CD4-positive, alpha-beta T cell (primary cell): ENCODE measurements at regions of chr5 and their contacts with region 1.

Region 1: DNA sequence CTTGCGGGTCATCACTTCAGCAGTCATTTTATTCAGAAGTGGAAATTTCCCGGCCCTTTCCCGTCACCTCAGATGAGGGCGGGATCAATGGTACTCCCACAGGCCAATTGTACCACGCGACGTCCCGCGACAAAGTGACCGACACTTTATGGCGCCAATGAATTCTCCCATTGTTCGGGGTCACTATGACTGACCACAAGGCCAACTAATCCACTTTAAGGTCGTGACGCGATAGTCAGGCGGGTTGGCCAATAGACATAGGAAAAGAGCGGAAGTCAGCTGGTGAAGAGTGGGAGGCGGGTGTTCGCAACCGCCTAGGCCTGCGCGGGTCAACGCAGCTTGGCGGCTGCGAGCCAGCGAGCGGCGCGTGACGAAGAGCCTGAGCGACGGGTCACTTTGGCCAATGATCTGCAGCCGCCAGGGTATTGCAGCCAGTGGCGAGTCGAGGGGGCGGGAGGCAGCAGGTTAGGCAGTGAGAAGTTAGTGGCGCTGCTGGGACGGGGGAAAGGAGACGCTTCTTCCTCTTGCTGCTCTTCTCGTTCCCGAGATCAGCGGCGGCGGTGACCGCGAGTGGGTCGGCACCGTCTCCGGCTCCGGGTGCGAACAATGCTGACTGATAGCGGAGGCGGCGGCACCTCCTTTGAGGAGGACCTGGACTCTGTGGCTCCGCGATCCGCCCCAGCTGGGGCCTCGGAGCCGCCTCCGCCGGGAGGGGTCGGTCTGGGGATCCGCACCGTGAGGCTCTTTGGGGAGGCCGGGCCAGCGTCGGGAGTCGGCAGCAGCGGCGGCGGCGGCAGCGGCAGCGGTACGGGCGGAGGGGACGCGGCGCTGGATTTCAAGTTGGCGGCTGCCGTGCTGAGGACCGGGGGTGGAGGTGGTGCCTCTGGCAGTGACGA is at the start of gene ANKHD1:
- DNase-seq: peak; percentile 90 to 100 (median 94)
- ATAC-seq: peak; percentile 78
- H3K4me3 ChIP-seq: peak within 1 kb of the TSS; percentile 97
- H3K4me3 Mint-ChIP-seq: no peak within 1 kb of the TSS
- H3K27ac ChIP-seq: peak within 1 kb of the TSS; percentile 91 to 96
- H3K27ac Mint-ChIP-seq: no peak within 1 kb of the TSS
- H3K4me1 ChIP-seq: peaks cover 36% of the 10 kb centered on the region
- H3K4me1 Mint-ChIP-seq: peaks cover 41% of the 10 kb centered on the region
- H3K27me3 ChIP-seq: no peaks in the 10 kb centered on the region
- H3K27me3 Mint-ChIP-seq: no peaks in the 10 kb centered on the region
- CTCF ChIP-seq: no peak
- total RNA-seq, gene ANKHD1: 202 to 212 TPM

Region 2: DNA sequence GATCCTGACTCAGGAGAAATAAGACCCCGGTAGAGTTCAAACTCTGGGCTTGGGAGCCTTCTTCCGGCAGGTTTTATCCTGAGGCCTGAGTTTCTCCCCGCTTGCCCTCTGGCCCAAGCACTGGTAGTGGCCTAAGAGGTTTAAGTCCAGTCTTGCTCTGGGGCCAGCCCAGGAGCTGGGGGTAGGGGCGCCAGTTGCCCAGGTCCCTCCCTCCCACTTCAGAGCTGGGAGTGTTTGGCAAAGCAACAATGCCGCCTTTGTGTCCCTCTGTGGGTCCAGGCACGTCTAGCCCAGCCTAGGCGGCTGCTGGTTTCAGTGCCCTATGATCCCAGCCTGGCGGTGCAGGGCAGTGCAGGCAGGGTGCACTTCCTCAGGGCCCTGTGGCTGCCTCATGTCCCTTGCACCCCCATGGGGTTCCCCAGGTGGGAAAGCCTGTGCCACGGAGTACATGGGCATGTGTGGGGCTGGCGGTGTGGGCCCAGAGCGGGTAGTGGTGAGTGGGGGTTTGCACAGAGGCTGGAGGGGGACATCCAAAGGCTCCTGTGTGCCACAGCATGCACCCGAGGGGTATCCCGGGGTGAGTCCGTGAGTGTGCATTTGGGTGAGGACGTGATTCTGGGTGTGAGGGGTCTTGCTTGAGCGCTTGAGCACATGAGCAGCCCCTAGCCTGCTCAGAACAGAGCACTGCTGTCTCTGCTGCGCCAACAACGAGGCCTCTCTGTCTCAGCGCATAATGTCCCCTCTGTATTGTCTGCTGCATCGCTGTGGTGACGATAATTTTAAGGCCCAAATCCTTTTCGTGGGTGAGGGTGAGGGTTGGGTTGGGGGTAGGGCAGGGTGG is 667.7 kb before region 1 on chr5:
- CTCF ChIA-PET with region 1: no interaction called
- POLR2A ChIA-PET with region 1: no interaction called
- intact Hi-C with region 1: no loop called
- DNase-seq: no peak
- ATAC-seq: no peak
- H3K4me3 ChIP-seq: no peak overlapping the region
- H3K4me3 Mint-ChIP-seq: no peak overlapping the region
- H3K27ac ChIP-seq: no peak overlapping the region
- H3K27ac Mint-ChIP-seq: no peak overlapping the region
- H3K4me1 ChIP-seq: no peaks in the 10 kb centered on the region
- H3K4me1 Mint-ChIP-seq: no peaks in the 10 kb centered on the region
- H3K27me3 ChIP-seq: no peaks in the 10 kb centered on the region
- H3K27me3 Mint-ChIP-seq: no peaks in the 10 kb centered on the region
- CTCF ChIP-seq: no peak

Region 3: GRCh38 chr5:140094889-140095288 is 306.7 kb before region 1 on chr5:
- CTCF ChIA-PET with region 1: no interaction called
- POLR2A ChIA-PET with region 1: no interaction called
- intact Hi-C with region 1: no loop called
- DNase-seq: no peak
- ATAC-seq: no peak
- H3K4me3 ChIP-seq: no peak overlapping the region
- H3K4me3 Mint-ChIP-seq: no peak overlapping the region
- H3K27ac ChIP-seq: no peak overlapping the region
- H3K27ac Mint-ChIP-seq: no peak overlapping the region
- H3K4me1 ChIP-seq: no peaks in the 10 kb centered on the region
- H3K4me1 Mint-ChIP-seq: no peaks in the 10 kb centered on the region
- H3K27me3 ChIP-seq: peaks cover 2 to 12% of the 10 kb centered on the region in 2 experiments
- H3K27me3 Mint-ChIP-seq: peaks cover 14% of the 10 kb centered on the region
- CTCF ChIP-seq: no peak

Region 4: DNA sequence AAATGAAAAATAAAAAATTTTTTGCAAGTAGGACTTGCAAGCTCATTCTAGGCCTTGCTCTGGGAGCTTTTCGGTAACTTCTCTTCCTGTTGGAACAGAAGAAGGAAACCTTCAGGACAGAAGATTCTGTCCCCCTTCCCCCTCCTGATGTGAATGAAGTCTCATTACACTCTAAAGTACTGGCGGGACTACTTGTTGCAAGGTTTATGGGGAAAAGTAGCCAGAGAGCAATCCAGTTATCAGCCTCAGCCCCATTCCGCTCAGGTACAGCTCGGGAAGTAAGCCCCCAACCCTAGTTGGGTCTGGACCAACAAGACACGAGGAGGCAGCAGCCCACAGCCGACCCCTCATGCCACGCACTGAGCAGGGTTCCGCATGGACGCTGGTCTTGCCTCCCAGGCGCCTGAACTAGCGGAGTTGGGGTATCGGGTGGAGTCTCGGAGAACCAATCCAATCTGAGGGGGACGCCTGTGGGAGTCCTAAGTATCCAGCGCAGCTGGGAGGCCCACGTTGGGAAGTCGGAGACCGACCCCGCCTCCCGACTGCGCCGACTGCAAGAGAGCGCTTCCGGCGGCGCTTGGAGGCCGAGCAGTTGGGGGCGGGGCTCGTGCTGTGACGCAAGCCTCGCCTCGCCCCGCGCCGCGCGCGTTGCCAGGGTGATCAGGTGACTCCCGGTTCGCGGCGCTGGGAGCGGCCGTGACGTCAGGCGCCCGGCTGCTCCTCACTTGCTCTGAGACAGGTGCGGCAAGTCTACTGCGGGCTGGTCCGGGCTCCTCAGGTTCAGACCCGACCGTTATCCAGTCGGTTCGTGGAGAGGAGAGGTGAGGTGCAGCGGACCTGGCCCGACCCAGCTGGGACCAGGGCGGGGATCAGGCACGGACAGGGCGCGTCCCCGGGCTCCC is 226.9 kb before region 1 on chr5 and contains the start of gene CYSTM1:
- CTCF ChIA-PET with region 1: no interaction called
- POLR2A ChIA-PET with region 1: interaction called, 8 read pairs
- intact Hi-C with region 1: loop called (anchors 1 to 5 kb)
- DNase-seq: peak; percentile 90 to 99 (median 94)
- ATAC-seq: peak; percentile 91
- H3K4me3 ChIP-seq: peak within 1 kb of the TSS; percentile 66
- H3K4me3 Mint-ChIP-seq: peak within 1 kb of the TSS; percentile 95
- H3K27ac ChIP-seq: peak within 1 kb of the TSS; percentile 68 to 82
- H3K27ac Mint-ChIP-seq: peak within 1 kb of the TSS; percentile 96
- H3K4me1 ChIP-seq: peaks cover 17% of the 10 kb centered on the region
- H3K4me1 Mint-ChIP-seq: peaks cover 16% of the 10 kb centered on the region
- H3K27me3 ChIP-seq: no peaks in the 10 kb centered on the region
- H3K27me3 Mint-ChIP-seq: peaks cover 5% of the 10 kb centered on the region
- CTCF ChIP-seq: no peak
- total RNA-seq, gene CYSTM1: 7.2 to 7.4 TPM

Region 5: DNA sequence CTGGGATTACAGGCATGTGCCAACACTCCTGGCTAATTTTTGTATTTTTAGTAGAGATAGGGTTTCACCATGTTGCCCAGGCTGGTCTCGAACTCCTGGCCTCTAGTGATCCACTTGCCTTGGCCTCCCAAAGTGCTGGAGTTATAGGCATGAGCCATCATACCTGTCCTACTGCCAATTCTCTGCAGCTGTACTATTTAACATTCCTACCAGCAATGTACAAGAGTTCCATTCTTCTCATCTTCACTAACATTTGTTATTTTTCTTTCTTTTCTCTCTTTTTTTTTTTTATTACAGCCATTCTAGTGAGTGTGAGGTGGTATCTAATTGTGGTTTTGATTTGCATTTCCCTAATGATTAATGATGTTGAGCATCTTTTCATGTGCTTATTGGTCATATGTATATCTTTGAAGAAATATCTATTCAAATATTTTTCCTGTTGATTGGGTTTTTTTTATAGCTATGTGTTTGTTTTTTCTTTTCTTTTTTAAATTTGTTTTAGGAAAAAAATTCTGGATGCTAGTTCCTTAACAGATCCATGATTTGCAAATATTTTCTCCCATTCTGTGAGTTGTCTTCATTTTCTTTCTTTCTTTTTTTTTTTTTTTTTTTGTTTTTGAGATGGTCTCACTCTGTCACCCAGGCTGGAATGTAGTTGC is 17.4 kb after region 1 on chr5:
- CTCF ChIA-PET with region 1: no interaction called
- POLR2A ChIA-PET with region 1: interaction called, 10 read pairs
- intact Hi-C with region 1: no loop called
- DNase-seq: no peak
- ATAC-seq: no peak
- H3K4me3 ChIP-seq: no peak overlapping the region
- H3K4me3 Mint-ChIP-seq: peak overlapping the region; percentile 73
- H3K27ac ChIP-seq: no peak overlapping the region
- H3K27ac Mint-ChIP-seq: no peak overlapping the region
- H3K4me1 ChIP-seq: peaks cover 29% of the 10 kb centered on the region
- H3K4me1 Mint-ChIP-seq: peaks cover 62% of the 10 kb centered on the region
- H3K27me3 ChIP-seq: no peaks in the 10 kb centered on the region
- H3K27me3 Mint-ChIP-seq: no peaks in the 10 kb centered on the region
- CTCF ChIP-seq: no peak

Region 6: DNA sequence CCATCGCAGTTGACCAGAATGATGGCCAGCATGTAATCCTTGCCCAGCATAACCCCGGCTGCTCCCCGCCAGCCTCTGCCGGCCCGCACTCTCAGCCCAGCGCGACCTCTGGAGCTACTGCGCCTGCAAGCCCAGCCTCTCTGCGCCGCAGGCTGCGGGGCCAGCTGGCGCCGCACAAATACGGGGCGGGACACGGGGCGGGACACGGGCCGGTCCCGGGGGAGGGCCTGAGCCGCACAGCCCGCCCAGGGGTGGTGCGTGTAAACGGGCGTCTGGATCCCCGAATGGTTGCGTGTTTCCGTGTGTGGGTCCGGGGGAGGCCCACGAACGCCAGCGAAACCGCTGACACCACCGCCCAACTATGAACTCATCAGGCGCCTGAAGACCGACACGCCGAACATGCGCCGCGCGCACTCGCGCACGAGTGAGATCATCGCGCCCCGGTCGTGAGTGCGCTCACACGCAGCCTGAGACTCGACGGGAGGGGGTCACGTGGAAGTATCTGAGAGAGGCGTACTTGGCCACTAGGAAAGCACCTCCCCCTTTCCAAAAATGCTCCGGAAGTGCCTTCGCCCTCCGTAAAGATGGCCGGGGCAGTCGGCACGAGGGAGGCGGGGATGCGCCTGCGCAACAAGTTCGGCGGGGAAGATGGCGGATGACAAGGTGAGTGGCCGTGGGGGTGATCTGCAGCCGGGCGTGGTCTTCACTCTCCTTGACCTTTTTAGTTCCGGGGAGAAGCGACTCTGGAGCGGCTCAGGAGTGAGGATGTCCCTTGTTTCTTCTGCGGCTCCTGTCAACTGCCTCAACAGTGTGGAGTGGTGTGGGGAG is 162.8 kb after region 1 on chr5 and contains the starts of genes APBB3 and SLC35A4:
- CTCF ChIA-PET with region 1: no interaction called
- POLR2A ChIA-PET with region 1: interaction called, 13 read pairs
- intact Hi-C with region 1: no loop called
- DNase-seq: peak; percentile 92 to 100 (median 96)
- ATAC-seq: peak; percentile 87
- H3K4me3 ChIP-seq: peak within 1 kb of the TSS; percentile 98
- H3K4me3 Mint-ChIP-seq: peak within 1 kb of the TSS; percentile 94
- H3K27ac ChIP-seq: peak within 1 kb of the TSS; percentile 89 to 97
- H3K27ac Mint-ChIP-seq: peak within 1 kb of the TSS; percentile 94
- H3K4me1 ChIP-seq: peaks cover 70% of the 10 kb centered on the region
- H3K4me1 Mint-ChIP-seq: peaks cover 59% of the 10 kb centered on the region
- H3K27me3 ChIP-seq: no peaks in the 10 kb centered on the region
- H3K27me3 Mint-ChIP-seq: no peaks in the 10 kb centered on the region
- CTCF ChIP-seq: no peak
- total RNA-seq, gene APBB3: 56.6 to 61.5 TPM
- total RNA-seq, gene SLC35A4: 16.9 to 17.8 TPM

Region 7: DNA sequence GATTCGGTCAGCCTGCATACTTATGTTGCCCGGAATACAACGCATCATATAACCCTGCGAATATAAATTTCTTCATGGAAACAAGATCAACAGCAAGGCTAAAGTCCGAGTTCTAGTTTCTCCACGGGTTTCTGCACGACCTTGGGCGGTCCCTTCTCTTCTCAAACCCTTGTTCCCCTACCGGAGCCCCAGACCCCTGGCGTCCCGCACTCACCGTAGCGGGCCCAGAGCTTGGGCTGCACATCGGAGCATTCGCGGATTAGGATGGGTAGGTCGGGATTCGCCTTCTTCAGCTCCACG is 245.4 kb after region 1 on chr5:
- CTCF ChIA-PET with region 1: no interaction called
- POLR2A ChIA-PET with region 1: interaction called, 57 read pairs
- intact Hi-C with region 1: loop called in 1 of 2 experiments (anchors 2 kb)
- DNase-seq: no peak
- ATAC-seq: no peak
- H3K4me3 ChIP-seq: peak overlapping the region; percentile 96
- H3K4me3 Mint-ChIP-seq: peak overlapping the region; percentile 98
- H3K27ac ChIP-seq: peak overlapping the region; percentile 96 to 98
- H3K27ac Mint-ChIP-seq: peak overlapping the region; percentile 96
- H3K4me1 ChIP-seq: peaks cover 36% of the 10 kb centered on the region
- H3K4me1 Mint-ChIP-seq: peaks cover 57% of the 10 kb centered on the region
- H3K27me3 ChIP-seq: no peaks in the 10 kb centered on the region
- H3K27me3 Mint-ChIP-seq: no peaks in the 10 kb centered on the region
- CTCF ChIP-seq: no peak

Region 8: DNA sequence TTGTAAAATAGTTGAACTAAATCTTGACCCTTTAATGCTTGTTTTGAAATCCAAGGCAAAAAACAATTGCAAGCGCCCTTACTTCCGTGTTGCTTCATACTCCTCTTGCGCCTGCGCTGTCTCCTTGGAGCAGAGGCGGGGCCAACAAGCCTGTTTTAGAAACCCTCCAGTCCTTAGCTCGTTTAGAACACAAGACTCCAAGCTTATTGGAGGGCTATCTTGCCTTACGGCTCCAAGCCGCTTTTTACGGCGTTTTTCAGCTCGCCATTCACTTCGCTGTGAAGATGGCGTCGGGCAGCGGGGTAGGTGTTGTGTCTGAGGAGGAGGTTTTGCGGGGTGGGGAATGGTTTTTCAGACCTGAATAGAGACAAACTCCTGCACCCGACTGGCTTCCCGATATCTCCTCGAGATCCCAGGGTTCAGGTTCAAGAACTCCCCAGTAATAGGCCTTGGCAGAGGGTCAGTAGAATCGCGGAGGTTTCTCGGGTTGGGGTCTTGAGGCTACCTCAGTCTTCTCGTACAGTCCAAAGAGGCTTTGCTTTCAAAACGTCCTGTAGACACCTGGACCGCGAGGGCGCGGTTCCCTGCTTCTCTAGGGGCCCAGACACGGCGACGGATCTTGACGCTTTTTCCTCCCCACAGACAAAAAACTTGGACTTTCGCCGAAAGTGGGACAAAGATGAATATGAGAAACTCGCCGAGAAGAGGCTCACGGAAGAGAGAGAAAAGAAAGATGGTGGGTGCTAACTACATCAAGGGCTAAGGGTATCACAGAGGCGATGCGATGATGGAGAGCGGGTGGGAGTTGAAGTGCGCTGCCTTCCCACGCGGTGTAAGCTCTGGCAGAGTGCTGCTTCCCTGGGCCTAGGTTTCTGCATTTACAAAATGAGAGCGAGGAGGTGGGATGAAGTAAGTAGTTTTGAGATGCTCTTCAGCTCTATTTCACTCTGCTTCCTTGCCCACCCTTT is 298.9 kb after region 1 on chr5 and contains the start of gene ZMAT2:
- CTCF ChIA-PET with region 1: no interaction called
- POLR2A ChIA-PET with region 1: interaction called, 21 read pairs
- intact Hi-C with region 1: loop called in 1 of 2 experiments (anchors 2 kb)
- DNase-seq: peak; percentile 84 to 98 (median 90)
- ATAC-seq: peak; percentile 98
- H3K4me3 ChIP-seq: peak within 1 kb of the TSS; percentile 96
- H3K4me3 Mint-ChIP-seq: peak within 1 kb of the TSS; percentile 96
- H3K27ac ChIP-seq: peak within 1 kb of the TSS; percentile 64 to 90
- H3K27ac Mint-ChIP-seq: peak within 1 kb of the TSS; percentile 85
- H3K4me1 ChIP-seq: peaks cover 13% of the 10 kb centered on the region
- H3K4me1 Mint-ChIP-seq: peaks cover 31% of the 10 kb centered on the region
- H3K27me3 ChIP-seq: no peaks in the 10 kb centered on the region
- H3K27me3 Mint-ChIP-seq: no peaks in the 10 kb centered on the region
- CTCF ChIP-seq: no peak
- total RNA-seq, gene ZMAT2: 29.0 to 32.3 TPM